B cell (primary cell): ENCODE measurements at regions of chr20 and their contacts with region 1.

Region 1: GRCh38 chr20:56516631-56517030 is 7.9 kb upstream of the FAM209A start:
- DNase-seq: no peak
- ATAC-seq: no peak
- H3K4me3 ChIP-seq: no peak overlapping the region
- H3K4me3 Mint-ChIP-seq: no peak overlapping the region
- H3K27ac ChIP-seq: no peak overlapping the region
- H3K27ac Mint-ChIP-seq: no peak overlapping the region
- H3K4me1 ChIP-seq: no peaks in the 10 kb centered on the region
- H3K4me1 Mint-ChIP-seq: no peaks in the 10 kb centered on the region
- H3K27me3 ChIP-seq: no peaks in the 10 kb centered on the region
- H3K27me3 Mint-ChIP-seq: no peaks in the 10 kb centered on the region
- CTCF ChIP-seq: no peak

Region 2: DNA sequence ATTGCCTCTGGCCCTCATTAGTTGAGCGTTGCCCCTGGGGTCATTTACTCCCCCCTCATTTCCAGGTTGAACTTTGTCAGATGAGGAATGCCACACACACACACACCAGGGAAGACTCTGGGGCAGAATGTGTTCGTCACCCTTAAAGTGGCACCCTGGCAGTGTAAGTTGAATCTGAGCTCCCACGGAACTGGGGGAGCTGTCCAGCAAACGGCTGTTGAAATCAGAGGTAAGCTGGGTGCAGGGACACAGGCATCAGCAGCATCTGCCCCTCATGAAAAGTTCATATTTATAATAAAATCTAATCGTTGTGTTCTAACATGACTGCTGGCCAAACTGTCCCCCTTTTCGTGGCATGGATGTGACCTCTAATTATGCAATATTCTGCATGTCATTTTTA is 272.4 kb before region 1 on chr20:
- CTCF ChIA-PET with region 1: no interaction called
- POLR2A ChIA-PET with region 1: no interaction called
- intact Hi-C with region 1: loop called (anchors 5 kb)
- DNase-seq: no peak
- ATAC-seq: no peak
- H3K4me3 ChIP-seq: no peak overlapping the region
- H3K4me3 Mint-ChIP-seq: no peak overlapping the region
- H3K27ac ChIP-seq: no peak overlapping the region
- H3K27ac Mint-ChIP-seq: no peak overlapping the region
- H3K4me1 ChIP-seq: no peaks in the 10 kb centered on the region
- H3K4me1 Mint-ChIP-seq: no peaks in the 10 kb centered on the region
- H3K27me3 ChIP-seq: peaks cover 0 to 8% (median 0%) of the 10 kb centered on the region in 4 experiments
- H3K27me3 Mint-ChIP-seq: peaks cover 17% of the 10 kb centered on the region
- CTCF ChIP-seq: no peak

Region 3: DNA sequence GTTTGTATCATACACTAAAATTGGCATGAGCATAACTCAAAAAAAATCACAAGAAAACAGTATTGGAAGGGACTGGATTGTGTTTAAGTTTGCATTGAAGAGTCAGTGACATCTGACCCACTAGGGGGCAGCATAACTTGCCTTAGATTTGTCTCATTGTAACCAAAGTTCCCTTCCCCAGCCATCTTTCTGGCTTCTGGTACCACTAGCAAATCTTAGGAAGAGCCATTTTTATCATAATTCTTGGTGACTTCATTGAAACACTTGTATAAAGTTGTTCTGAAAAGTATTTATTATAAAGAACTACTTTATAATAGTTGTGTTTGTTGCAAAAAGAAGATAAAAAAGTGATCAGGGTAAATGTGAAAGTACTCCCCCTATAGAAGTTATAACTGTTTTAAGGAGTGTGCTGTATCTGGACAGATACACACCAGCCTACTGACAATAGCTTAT is 116.5 kb before region 1 on chr20:
- CTCF ChIA-PET with region 1: interaction called, 5 read pairs
- POLR2A ChIA-PET with region 1: no interaction called
- intact Hi-C with region 1: loop called (anchors 1 kb)
- DNase-seq: peak; percentile 77
- ATAC-seq: peak; percentile 47
- H3K4me3 ChIP-seq: no peak overlapping the region
- H3K4me3 Mint-ChIP-seq: no peak overlapping the region
- H3K27ac ChIP-seq: no peak overlapping the region
- H3K27ac Mint-ChIP-seq: no peak overlapping the region
- H3K4me1 ChIP-seq: no peaks in the 10 kb centered on the region
- H3K4me1 Mint-ChIP-seq: peaks cover 6% of the 10 kb centered on the region
- H3K27me3 ChIP-seq: no peaks in the 10 kb centered on the region
- H3K27me3 Mint-ChIP-seq: no peaks in the 10 kb centered on the region
- CTCF ChIP-seq: peak; percentile 96

Region 4: GRCh38 chr20:56566271-56566981 is 49.8 kb after region 1 on chr20:
- CTCF ChIA-PET with region 1: no interaction called
- POLR2A ChIA-PET with region 1: no interaction called
- intact Hi-C with region 1: no loop called
- DNase-seq: no peak
- ATAC-seq: no peak
- H3K4me3 ChIP-seq: no peak overlapping the region
- H3K4me3 Mint-ChIP-seq: no peak overlapping the region
- H3K27ac ChIP-seq: no peak overlapping the region
- H3K27ac Mint-ChIP-seq: no peak overlapping the region
- H3K4me1 ChIP-seq: no peaks in the 10 kb centered on the region
- H3K4me1 Mint-ChIP-seq: no peaks in the 10 kb centered on the region
- H3K27me3 ChIP-seq: peaks cover 0 to 3% (median 0%) of the 10 kb centered on the region in 4 experiments
- H3K27me3 Mint-ChIP-seq: peaks cover 9% of the 10 kb centered on the region
- CTCF ChIP-seq: no peak